ENCODE measurements at regions of chr22 and their contacts with region 1.

Region 1: GRCh38 chr22:22060200-22061084 is 77.9 kb upstream of the TOP3B start:
- DNase-seq: peak; percentile 25 to 95 (median 72)

Region 2: DNA sequence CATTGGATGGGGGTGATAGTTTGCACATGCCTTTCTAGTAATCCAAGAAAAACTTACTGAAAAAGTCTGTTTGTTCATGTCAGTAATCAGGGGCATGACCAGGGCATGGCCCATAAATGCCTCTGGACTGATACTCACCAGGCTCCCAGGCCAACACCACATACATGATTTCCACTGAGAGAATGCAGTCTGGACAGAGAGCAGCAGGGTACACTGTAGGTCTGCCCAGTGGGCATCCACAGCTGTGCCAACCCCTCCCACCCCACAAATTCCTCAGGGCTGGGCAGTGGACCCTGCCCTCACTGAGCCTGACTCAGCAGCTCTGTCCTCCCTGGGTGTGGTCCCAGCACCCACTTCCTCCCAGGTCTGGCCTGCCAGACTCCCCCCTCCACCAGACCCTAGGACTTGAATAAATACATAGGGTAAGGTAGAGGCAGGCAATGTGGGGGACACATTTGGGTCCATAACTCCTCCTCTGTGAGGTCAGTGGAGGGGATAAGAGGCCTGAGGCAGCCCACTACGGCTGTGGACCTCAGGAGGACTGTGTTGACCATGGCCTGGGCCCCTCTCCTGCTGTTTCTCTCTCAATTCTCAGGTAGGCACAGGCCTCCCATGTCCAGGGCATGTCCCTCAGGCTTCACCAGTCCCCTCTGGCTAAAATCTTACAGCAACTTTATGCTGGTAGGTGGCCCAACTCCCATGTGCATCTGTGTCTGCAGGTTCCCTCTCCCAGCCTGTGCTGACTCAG is 14.4 kb after region 1 on chr22:
- intact Hi-C with region 1: no loop called
- DNase-seq: peak in 2 of 10 donors; percentile 14 to 88

Region 3: GRCh38 chr22:22141771-22142591 is 81.5 kb after region 1 on chr22:
- intact Hi-C with region 1: no loop called
- DNase-seq: no peak

Region 4: GRCh38 chr22:22235558-22235957 is 175.1 kb after region 1 on chr22:
- intact Hi-C with region 1: loop called (anchors 5 kb)
- DNase-seq: peak in 2 of 10 donors; percentile 31 to 37

Measured in posterior cingulate gyrus (tissue), 11 donors.